ENCODE measurements at regions of chr10 and their contacts with region 1.

Region 1: GRCh38 chr10:13440185-13441061 is 88.4 kb downstream of the BEND7 start:
- H3K4me3 ChIP-seq: peak overlapping the region; percentile 25
- H3K27ac ChIP-seq: no peak overlapping the region
- H3K4me1 ChIP-seq: no peaks in the 10 kb centered on the region
- CTCF ChIP-seq: peak; percentile 79

Region 2: DNA sequence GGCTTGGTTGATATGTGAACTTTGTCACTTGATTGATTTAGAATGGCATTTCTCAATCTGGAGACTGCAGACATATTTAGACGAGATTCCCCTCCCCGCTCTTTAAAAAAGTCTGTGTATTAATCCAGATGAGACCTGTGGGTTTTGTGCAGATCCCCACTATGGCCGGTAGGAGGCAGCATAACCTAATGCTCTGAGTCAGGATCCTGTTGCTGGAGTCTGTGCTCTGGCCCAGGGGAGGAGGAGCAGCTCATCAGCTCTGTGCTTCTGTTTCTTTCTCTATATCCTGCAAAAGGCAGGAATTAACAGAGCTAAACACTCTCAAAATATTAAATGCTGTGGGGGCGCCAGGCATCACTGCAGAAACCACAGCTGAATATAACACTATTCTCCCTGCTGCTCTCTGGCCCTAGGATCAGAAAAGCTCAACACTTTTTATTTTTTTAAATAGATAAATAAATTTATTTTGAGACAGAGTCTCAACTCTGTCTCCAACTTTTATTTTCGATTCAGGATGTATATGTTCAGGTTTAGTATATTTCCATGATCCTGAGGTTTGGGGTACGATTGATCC is 68.4 kb before region 1 on chr10:
- CTCF ChIA-PET with region 1: interaction called, 138 read pairs
- POLR2A ChIA-PET with region 1: interaction called, 6 read pairs
- H3K4me3 ChIP-seq: no peak overlapping the region
- H3K27ac ChIP-seq: no peak overlapping the region
- H3K4me1 ChIP-seq: no peaks in the 10 kb centered on the region
- CTCF ChIP-seq: peak; percentile 68; the same call in 1 of the 2 replicates

Region 3: DNA sequence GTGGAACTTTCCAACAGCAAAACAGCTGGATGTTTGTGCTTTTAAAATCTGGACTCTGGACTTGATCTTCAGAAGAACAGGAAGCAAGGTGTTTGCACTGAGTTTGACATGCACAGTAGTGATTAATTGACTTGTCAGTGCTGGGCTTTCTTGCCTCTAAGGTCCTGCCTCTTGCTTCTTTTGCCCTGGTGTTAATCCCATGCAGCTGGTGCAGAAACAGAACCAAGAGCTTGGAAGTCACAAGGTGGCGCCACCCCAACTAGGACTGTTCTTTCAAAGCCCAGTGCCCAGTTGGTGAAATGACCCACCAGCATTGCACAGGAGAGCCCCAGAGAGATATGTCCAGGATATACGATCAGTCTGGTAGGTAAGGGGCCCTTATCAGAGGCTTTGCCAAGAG is 25.5 kb before region 1 on chr10:
- CTCF ChIA-PET with region 1: interaction called, 32 read pairs
- POLR2A ChIA-PET with region 1: no interaction called
- H3K4me3 ChIP-seq: no peak overlapping the region
- H3K27ac ChIP-seq: no peak overlapping the region
- H3K4me1 ChIP-seq: no peaks in the 10 kb centered on the region
- CTCF ChIP-seq: no peak

Region 4: DNA sequence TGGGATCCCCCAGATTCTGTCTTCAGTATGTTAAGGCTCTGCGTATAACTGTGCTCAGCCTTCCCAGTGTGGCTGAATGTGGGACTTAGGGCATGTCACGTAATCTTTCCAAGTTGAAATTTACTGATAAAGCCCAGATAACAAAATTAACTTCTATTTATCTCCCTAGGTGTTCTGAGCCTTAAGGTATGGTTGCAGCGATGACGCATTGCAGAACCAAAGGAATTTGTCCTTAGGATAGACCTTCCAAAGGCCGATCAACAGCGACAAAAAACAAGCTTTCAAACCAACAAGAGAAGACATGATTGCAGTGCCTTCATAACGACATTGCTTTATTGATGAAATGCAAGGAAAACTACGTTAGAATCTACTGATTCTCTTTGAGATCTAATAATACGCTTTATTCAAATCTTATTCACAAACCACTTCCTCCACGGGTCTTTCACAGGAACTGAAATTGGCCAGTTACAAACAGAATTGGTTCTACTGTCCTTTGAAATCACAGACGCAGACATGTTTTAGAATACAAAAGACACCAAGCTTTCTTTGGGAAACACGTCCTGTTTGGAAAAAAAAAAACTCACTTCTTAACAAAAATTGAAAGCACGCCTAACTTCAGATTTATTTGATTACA is 17.7 kb before region 1 on chr10:
- CTCF ChIA-PET with region 1: interaction called, 32 read pairs
- POLR2A ChIA-PET with region 1: no interaction called
- H3K4me3 ChIP-seq: no peak overlapping the region
- H3K27ac ChIP-seq: no peak overlapping the region
- H3K4me1 ChIP-seq: no peaks in the 10 kb centered on the region
- CTCF ChIP-seq: no peak

Region 5: DNA sequence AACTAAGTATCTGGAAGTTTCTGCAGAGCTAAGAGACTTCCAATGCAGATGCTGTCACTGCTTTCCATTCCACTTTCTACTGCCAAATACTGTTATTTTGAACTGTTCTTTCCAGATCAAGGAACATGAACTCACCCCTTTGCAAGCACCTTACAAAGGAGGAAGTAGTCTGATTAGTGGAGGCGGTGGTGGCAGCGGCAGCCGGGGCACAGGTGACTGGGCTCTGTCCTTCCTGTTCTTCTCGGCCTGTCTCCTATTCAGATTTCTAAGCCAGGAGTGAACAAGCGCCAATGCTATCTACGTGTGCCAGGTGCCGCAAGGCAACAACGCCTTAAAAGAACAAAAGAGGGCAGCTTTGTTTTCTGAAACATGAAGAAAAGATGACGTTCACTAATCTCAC is 43.5 kb after region 1 on chr10:
- CTCF ChIA-PET with region 1: interaction called, 12 read pairs
- POLR2A ChIA-PET with region 1: no interaction called
- H3K4me3 ChIP-seq: no peak overlapping the region
- H3K27ac ChIP-seq: no peak overlapping the region
- H3K4me1 ChIP-seq: no peaks in the 10 kb centered on the region
- CTCF ChIP-seq: no peak

Region 6: DNA sequence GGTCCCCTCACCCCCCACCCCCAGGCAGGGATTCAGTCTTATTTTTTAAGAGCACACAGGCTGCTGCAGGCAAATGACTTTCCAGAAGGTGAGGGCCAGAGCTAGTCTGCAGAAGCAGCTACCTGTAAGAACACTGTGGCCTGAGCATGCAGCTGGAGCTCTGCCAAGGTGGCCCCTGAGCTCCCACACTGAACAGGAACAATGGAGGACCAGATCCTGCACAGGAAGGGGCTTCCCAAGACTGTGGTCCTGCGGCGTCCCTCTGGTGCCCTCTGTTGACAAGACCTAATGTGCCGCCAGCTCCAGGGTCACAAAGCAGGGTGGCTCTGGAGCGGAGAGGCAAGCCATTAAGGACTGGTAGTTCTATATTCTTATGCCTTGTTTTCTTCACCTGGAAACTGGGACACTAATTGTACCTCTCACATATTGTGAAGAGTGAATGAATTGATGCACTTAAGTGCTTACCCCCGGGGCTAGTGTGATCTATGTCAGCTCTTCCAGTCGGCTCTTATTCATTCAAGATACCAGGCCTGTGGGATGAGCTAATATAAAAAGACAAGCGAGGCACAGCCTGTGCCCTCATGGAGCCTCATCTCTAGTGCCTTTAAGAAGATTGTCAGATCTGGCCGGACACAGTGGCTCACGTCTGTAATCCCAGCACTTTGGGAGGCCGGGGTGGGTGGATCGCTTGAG is 96.4 kb after region 1 on chr10:
- CTCF ChIA-PET with region 1: interaction called, 15 read pairs
- POLR2A ChIA-PET with region 1: no interaction called
- H3K4me3 ChIP-seq: peak overlapping the region; percentile 2; the same call in 1 of the 2 replicates
- H3K27ac ChIP-seq: no peak overlapping the region
- H3K4me1 ChIP-seq: no peaks in the 10 kb centered on the region
- CTCF ChIP-seq: peak; percentile 59